MCF 10A (cell line): ENCODE measurements at regions of chr3 and their contacts with region 1.

Region 1: DNA sequence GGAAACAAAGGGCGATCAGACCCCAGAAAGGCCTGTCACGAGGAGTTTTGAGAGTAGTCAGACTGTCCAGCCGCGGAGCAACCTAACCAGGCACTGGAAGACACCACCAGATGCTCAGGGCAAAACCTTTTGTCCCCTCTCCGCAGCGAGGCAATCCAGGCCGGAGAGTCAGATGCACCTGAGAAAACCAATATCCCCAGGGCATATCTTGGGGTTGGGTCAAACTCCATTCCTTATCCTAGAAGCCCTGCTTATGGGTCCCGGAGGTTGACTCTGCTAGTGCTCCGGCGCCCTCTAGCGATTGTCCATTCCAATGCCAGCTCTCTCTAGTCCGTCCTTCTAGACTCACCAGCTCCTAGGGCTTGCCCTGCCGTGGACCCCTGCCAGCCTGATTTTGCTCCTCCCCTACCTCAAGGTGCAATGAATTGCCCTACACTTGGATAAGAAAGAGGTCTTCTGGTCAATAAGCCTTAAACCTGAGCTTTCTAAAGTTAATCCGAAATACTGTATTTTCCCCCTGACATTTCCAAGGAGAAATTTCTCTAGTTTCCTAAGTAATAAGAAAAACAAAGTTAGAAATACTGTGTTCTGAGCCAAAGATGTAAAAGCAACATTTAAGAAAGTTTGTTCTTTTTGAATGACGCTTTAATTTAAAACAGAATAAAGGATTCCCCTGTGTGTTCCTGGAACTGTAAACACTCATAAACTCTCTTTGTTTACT is 5.5 kb downstream of the CPNE4 start:
- DNase-seq: peak; percentile 90
- H3K4me3 Mint-ChIP-seq: no peak overlapping the region
- H3K27ac Mint-ChIP-seq: no peak overlapping the region
- H3K4me1 Mint-ChIP-seq: peaks cover 3% of the 10 kb centered on the region
- H3K27me3 Mint-ChIP-seq: peaks cover 39% of the 10 kb centered on the region
- CTCF ChIP-seq: peak; percentile 88

Region 2: DNA sequence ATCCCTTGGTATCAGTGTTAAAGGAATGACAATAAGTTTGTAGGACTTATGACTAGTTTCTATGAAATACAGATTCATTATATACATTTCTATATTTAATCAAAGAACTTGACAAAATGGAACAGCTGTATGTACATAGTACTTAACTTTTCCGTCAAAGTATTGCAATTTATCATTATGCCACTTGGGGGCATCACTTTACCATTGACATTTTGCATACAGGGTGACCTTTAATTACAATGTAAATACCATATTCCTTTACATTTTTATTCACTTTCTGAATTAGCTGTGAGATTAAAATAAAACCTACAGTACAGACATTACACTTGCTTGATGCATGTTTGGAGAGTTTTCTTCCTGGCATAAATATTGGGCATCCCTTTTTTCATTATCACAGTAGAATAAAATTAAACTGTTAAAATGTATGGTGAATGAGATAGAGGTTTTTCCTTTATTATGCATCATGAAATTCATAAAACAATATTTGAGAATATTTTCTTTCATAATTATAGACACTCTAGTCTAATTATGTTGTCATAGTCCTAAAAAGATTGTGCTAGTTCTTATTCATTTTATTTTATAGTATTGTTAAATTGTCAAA is 995.8 kb before region 1 on chr3:
- CTCF ChIA-PET with region 1: interaction called, 12 read pairs
- POLR2A ChIA-PET with region 1: no interaction called
- intact Hi-C with region 1: loop called (anchors 5 kb)
- DNase-seq: peak; percentile 56
- H3K4me3 Mint-ChIP-seq: no peak overlapping the region
- H3K27ac Mint-ChIP-seq: no peak overlapping the region
- H3K4me1 Mint-ChIP-seq: peaks cover 7% of the 10 kb centered on the region
- H3K27me3 Mint-ChIP-seq: no peaks in the 10 kb centered on the region
- CTCF ChIP-seq: peak; percentile 67

Region 3: GRCh38 chr3:132006605-132007204 is 22.6 kb before region 1 on chr3:
- CTCF ChIA-PET with region 1: interaction called, 49 read pairs
- POLR2A ChIA-PET with region 1: no interaction called
- intact Hi-C with region 1: loop called (anchors 1 kb)
- DNase-seq: peak; percentile 71
- H3K4me3 Mint-ChIP-seq: no peak overlapping the region
- H3K27ac Mint-ChIP-seq: no peak overlapping the region
- H3K4me1 Mint-ChIP-seq: no peaks in the 10 kb centered on the region
- H3K27me3 Mint-ChIP-seq: no peaks in the 10 kb centered on the region
- CTCF ChIP-seq: peak; percentile 39

Region 4: GRCh38 chr3:132135628-132136333 is 106.4 kb after region 1 on chr3:
- CTCF ChIA-PET with region 1: interaction called, 11 read pairs
- POLR2A ChIA-PET with region 1: no interaction called
- intact Hi-C with region 1: no loop called
- DNase-seq: peak; percentile 93
- H3K4me3 Mint-ChIP-seq: peak overlapping the region; percentile 43
- H3K27ac Mint-ChIP-seq: peak overlapping the region; percentile 90
- H3K4me1 Mint-ChIP-seq: peaks cover 24% of the 10 kb centered on the region
- H3K27me3 Mint-ChIP-seq: no peaks in the 10 kb centered on the region
- CTCF ChIP-seq: no peak